Activated B cell treated with CpG ODN at 0.5 μM for 24 hours (primary cell): ENCODE measurements at regions of chr15 and their contacts with region 1.

Region 1: GRCh38 chr15:72375847-72376581 is at the start of gene HEXA:
- DNase-seq: peak; percentile 99
- ATAC-seq: peak; percentile 83
- H3K4me3 Mint-ChIP-seq: peak within 1 kb of the TSS; percentile 91
- H3K27ac Mint-ChIP-seq: peak within 1 kb of the TSS; percentile 97
- H3K4me1 Mint-ChIP-seq: peaks cover 58% of the 10 kb centered on the region
- H3K27me3 Mint-ChIP-seq: no peaks in the 10 kb centered on the region
- CTCF ChIP-seq: no peak
- total RNA-seq, gene HEXA: 100 and 102 TPM in 2 replicates

Region 2: DNA sequence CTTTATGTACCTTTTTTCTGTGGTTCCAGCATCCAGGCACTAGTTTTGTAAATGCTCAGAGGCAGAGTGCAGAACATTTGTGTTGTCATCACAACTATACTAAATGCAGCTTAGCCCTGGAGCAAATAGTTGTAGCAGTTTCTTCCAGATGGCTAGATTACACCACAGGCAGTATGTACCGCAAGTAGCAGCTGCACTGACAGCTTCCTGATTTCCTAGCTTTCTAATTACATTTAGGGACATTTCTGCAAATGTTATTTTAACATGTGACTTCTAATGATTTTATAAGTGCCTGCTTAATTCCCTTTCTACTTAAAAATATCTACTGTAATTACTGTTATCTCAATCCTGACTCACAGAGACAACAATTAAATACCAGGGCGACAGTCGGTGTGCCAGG is 459.2 kb before region 1 on chr15:
- CTCF ChIA-PET with region 1: no interaction called
- POLR2A ChIA-PET with region 1: no interaction called
- intact Hi-C with region 1: no loop called
- DNase-seq: no peak
- ATAC-seq: no peak
- H3K4me3 Mint-ChIP-seq: no peak overlapping the region
- H3K27ac Mint-ChIP-seq: no peak overlapping the region
- H3K4me1 Mint-ChIP-seq: peaks cover 5% of the 10 kb centered on the region
- H3K27me3 Mint-ChIP-seq: no peaks in the 10 kb centered on the region
- CTCF ChIP-seq: no peak

Region 3: GRCh38 chr15:72105111-72105510 is 270.9 kb before region 1 on chr15:
- CTCF ChIA-PET with region 1: no interaction called
- POLR2A ChIA-PET with region 1: no interaction called
- intact Hi-C with region 1: no loop called
- DNase-seq: no peak
- ATAC-seq: no peak
- H3K4me3 Mint-ChIP-seq: no peak overlapping the region
- H3K27ac Mint-ChIP-seq: no peak overlapping the region
- H3K4me1 Mint-ChIP-seq: peaks cover 22% of the 10 kb centered on the region
- H3K27me3 Mint-ChIP-seq: no peaks in the 10 kb centered on the region
- CTCF ChIP-seq: no peak

Region 4: GRCh38 chr15:72117486-72118399 is 258.3 kb before region 1 on chr15 and contains the start of gene MYO9A:
- CTCF ChIA-PET with region 1: no interaction called
- POLR2A ChIA-PET with region 1: no interaction called
- intact Hi-C with region 1: loop called (anchors 5 kb)
- DNase-seq: peak; percentile 93
- ATAC-seq: peak; percentile 74
- H3K4me3 Mint-ChIP-seq: peak within 1 kb of the TSS; percentile 99
- H3K27ac Mint-ChIP-seq: peak within 1 kb of the TSS; percentile 99
- H3K4me1 Mint-ChIP-seq: peaks cover 33% of the 10 kb centered on the region
- H3K27me3 Mint-ChIP-seq: no peaks in the 10 kb centered on the region
- CTCF ChIP-seq: no peak
- total RNA-seq, gene MYO9A: 39.4 and 50.6 TPM in 2 replicates

Region 5: GRCh38 chr15:72319985-72320671 is 55.9 kb before region 1 on chr15 and contains the start of gene CELF6:
- CTCF ChIA-PET with region 1: no interaction called
- POLR2A ChIA-PET with region 1: interaction called, 14 read pairs
- intact Hi-C with region 1: loop called (anchors 2 kb)
- DNase-seq: peak; percentile 77
- ATAC-seq: peak; percentile 81
- H3K4me3 Mint-ChIP-seq: peak within 1 kb of the TSS; percentile 86
- H3K27ac Mint-ChIP-seq: peak within 1 kb of the TSS; percentile 47
- H3K4me1 Mint-ChIP-seq: peaks cover 18% of the 10 kb centered on the region
- H3K27me3 Mint-ChIP-seq: no peaks in the 10 kb centered on the region
- CTCF ChIP-seq: no peak
- total RNA-seq, gene CELF6: 2.0 and 2.2 TPM in 2 replicates

Region 6: GRCh38 chr15:72464251-72464650 is 88.2 kb after region 1 on chr15:
- CTCF ChIA-PET with region 1: no interaction called
- POLR2A ChIA-PET with region 1: interaction called, 11 read pairs
- intact Hi-C with region 1: no loop called
- DNase-seq: no peak
- ATAC-seq: no peak
- H3K4me3 Mint-ChIP-seq: no peak overlapping the region
- H3K27ac Mint-ChIP-seq: no peak overlapping the region
- H3K4me1 Mint-ChIP-seq: peaks cover 19% of the 10 kb centered on the region
- H3K27me3 Mint-ChIP-seq: no peaks in the 10 kb centered on the region
- CTCF ChIP-seq: no peak

Region 7: GRCh38 chr15:72685925-72686794 is 310.1 kb after region 1 on chr15 and contains the starts of genes BBS4 and HIGD2B:
- CTCF ChIA-PET with region 1: no interaction called
- POLR2A ChIA-PET with region 1: interaction called, 6 read pairs
- intact Hi-C with region 1: loop called (anchors 1 kb)
- DNase-seq: peak; percentile 83
- ATAC-seq: peak; percentile 93
- H3K4me3 Mint-ChIP-seq: peak within 1 kb of the TSS; percentile 97
- H3K27ac Mint-ChIP-seq: peak within 1 kb of the TSS; percentile 93
- H3K4me1 Mint-ChIP-seq: peaks cover 20% of the 10 kb centered on the region
- H3K27me3 Mint-ChIP-seq: no peaks in the 10 kb centered on the region
- CTCF ChIP-seq: no peak
- total RNA-seq, gene BBS4: 19.4 and 21.4 TPM in 2 replicates
- total RNA-seq, gene HIGD2B: 0.20 and 0.55 TPM in 2 replicates